Posterior cingulate gyrus (tissue), 11 donors: ENCODE measurements at regions of chr3 and their contacts with region 1.

Region 1: GRCh38 chr3:107346564-107346963 is 30.7 kb upstream of the CCDC54 start:
- DNase-seq: no peak

Region 2: GRCh38 chr3:107289359-107289758 is 57.2 kb before region 1 on chr3:
- intact Hi-C with region 1: no loop called
- DNase-seq: no peak

Region 3: GRCh38 chr3:107356706-107357105 is 10.1 kb after region 1 on chr3:
- intact Hi-C with region 1: loop called (anchors 1 kb)
- DNase-seq: no peak

Region 4: DNA sequence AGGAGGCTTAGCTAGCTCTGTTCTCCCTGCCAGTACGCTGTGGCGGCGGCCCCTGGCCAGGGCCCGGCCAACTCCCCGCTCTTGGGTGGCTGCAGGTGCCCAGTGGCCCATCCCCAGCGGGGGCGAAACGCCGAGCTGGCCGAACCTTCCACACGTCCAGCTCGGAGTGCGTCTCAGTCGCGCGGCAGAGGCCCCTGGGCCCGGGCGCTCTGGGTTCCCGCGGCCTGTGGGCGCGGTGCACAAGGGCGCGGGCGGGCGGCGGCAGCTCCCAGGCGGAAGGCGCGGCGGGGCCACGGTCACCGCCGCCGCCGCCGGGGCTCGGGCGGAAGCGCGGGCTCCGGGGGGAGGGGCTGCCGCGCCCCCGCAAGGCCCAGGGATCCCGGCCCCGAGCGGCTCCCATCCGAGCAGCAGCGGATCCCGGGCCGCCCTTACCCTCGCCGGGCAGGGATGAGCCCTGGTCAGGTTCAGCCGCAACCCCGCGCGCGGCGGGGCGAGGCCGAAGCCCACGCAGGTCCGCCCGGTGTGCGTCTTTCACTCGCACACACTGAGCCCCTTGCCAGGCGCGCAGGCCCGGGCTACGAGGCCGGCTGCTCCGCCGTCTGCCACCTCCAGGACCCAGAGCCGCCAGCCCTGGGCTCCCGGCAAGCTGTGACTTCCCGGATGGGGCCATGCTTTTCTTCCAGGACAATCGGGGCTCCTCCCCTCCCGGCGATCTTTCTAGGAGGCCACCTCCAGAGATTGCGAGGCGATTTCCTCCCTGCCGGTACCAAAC is 84.9 kb after region 1 on chr3:
- intact Hi-C with region 1: no loop called
- DNase-seq: peak; percentile 61 to 96 (median 70)

Region 5: GRCh38 chr3:107833043-107833442 is 486.5 kb after region 1 on chr3:
- intact Hi-C with region 1: no loop called
- DNase-seq: no peak